ENCODE measurements at regions of chr12 and their contacts with region 1.

Region 1: DNA sequence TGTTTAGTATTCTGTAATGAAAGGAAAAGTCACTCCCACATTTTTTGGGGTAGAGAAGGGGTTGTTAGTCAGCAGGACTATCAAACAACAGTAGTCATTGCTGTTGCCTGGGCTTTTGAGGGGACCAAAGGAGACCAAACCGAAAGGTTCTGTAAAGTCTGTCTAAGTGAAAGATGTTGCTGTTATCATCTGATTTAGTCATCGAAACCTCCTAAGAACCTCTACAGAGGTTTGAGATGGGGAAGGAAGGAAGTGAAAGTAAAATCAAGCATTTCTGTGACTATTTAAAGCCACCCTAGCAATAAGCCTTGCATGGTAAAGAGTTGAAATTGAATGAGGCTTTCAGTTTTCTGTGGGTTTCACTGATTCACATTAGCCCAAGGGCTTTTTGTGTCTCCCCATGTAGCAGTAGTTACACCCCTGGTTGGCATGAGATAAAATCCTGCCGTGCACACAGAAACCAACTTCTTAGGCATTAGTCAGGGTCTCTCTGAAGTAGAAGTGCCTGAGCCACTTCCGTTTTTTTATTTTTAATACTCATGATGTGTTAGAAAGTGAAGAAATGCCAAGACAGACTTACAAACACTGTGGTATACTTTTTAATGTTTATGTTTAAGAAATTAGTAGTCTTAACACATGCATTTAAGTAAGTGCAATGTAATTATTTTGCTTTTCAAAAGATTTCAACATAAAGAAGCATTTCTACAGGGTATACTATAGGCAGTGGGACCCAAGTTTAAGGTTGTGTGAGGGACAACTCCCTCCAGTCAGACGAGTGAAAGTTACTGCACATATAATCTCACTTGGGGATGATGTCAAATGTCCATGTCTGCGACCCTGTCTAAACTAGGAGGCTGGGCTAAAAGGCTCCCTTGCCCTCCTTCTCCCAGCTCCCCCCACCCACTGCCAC is 50.4 kb downstream of the DYRK2 start:
- DNase-seq: peak; percentile 52
- ATAC-seq: peak; percentile 70
- H3K4me3 ChIP-seq: peak overlapping the region; percentile 34
- H3K27ac ChIP-seq: peak overlapping the region; percentile 21; the same call in 1 of the 2 replicates
- H3K4me1 ChIP-seq: peaks cover 8% of the 10 kb centered on the region
- H3K27me3 ChIP-seq: no peaks in the 10 kb centered on the region
- CTCF ChIP-seq: no peak
- POLR2A ChIP-seq: no peak
- RAD21 ChIP-seq: no peak

Region 2: GRCh38 chr12:67299926-67300325 is 399.0 kb before region 1 on chr12:
- CTCF ChIA-PET with region 1: no interaction called
- POLR2A ChIA-PET with region 1: no interaction called
- dilution Hi-C with region 1: no loop called
- in situ Hi-C with region 1: no loop called
- intact Hi-C with region 1: no loop called
- DNase-seq: no peak
- ATAC-seq: no peak
- H3K4me3 ChIP-seq: no peak overlapping the region
- H3K27ac ChIP-seq: no peak overlapping the region
- H3K4me1 ChIP-seq: no peaks in the 10 kb centered on the region
- H3K27me3 ChIP-seq: no peaks in the 10 kb centered on the region
- CTCF ChIP-seq: no peak
- POLR2A ChIP-seq: no peak
- RAD21 ChIP-seq: no peak

Region 3: GRCh38 chr12:67630373-67631088 is 68.4 kb before region 1 on chr12:
- CTCF ChIA-PET with region 1: no interaction called
- POLR2A ChIA-PET with region 1: no interaction called
- dilution Hi-C with region 1: no loop called
- in situ Hi-C with region 1: no loop called
- intact Hi-C with region 1: no loop called
- DNase-seq: no peak
- ATAC-seq: no peak
- H3K4me3 ChIP-seq: no peak overlapping the region
- H3K27ac ChIP-seq: no peak overlapping the region
- H3K4me1 ChIP-seq: no peaks in the 10 kb centered on the region
- H3K27me3 ChIP-seq: peaks cover 4% of the 10 kb centered on the region
- CTCF ChIP-seq: no peak
- POLR2A ChIP-seq: no peak
- RAD21 ChIP-seq: no peak

Region 4: GRCh38 chr12:67681105-67681778 is 17.7 kb before region 1 on chr12:
- CTCF ChIA-PET with region 1: no interaction called
- POLR2A ChIA-PET with region 1: no interaction called
- dilution Hi-C with region 1: no loop called
- in situ Hi-C with region 1: no loop called
- intact Hi-C with region 1: loop called (anchors 2 kb)
- DNase-seq: peak; percentile 97
- ATAC-seq: peak; percentile 78
- H3K4me3 ChIP-seq: no peak overlapping the region
- H3K27ac ChIP-seq: peak overlapping the region; percentile 91
- H3K4me1 ChIP-seq: peaks cover 6% of the 10 kb centered on the region
- H3K27me3 ChIP-seq: no peaks in the 10 kb centered on the region
- CTCF ChIP-seq: no peak
- POLR2A ChIP-seq: no peak
- RAD21 ChIP-seq: no peak

Region 5: DNA sequence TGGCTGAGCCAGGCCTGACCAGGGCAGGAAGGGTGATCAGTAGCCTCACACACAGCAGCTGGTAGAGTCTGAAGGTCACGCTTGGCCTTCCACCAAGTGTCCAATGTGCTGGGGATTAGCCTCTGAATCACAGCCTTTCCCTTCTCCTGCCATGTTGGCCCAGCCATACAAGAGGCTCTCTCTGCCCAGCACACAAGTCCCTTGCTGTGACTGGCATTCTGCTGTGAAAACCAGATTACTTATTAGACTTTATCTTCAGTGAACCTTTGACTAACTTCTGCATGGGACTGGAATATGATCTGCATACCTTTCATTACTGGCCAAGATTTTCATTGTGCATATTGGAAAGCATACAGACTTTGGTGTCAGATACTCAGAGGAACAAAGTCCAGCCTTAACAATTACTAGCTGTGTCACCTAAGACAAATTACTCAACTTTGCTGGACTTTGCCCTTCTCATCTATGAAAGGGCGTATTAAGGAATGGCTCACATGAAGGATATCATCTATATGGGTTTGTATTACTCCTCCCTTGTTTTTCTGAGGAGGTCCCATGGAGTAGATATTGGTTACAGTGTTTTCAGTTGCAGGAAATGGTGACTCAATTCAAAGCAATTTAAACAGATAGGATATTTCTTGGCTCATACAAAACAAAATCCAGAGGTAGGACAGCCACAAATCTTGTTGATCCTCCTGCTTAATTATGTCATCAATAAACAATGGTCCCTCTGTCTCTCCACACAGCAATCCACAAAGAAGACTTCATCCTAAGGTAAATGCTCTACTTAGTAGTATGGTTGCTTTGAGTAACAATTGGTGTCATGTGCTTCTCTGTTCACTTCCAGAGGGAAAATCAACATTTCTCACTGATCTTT is 49.2 kb after region 1 on chr12:
- CTCF ChIA-PET with region 1: no interaction called
- POLR2A ChIA-PET with region 1: no interaction called
- dilution Hi-C with region 1: no loop called
- in situ Hi-C with region 1: no loop called
- intact Hi-C with region 1: loop called (anchors 5 kb)
- DNase-seq: peak; percentile 72
- ATAC-seq: peak; percentile 86
- H3K4me3 ChIP-seq: no peak overlapping the region
- H3K27ac ChIP-seq: 0 out of 2 replicates have a peak overlapping the region, but pooled peaks have one; percentile 1
- H3K4me1 ChIP-seq: peaks cover 9% of the 10 kb centered on the region
- H3K27me3 ChIP-seq: no peaks in the 10 kb centered on the region
- CTCF ChIP-seq: no peak
- POLR2A ChIP-seq: no peak
- RAD21 ChIP-seq: no peak

Region 6: GRCh38 chr12:67794161-67794560 is 95.2 kb after region 1 on chr12:
- CTCF ChIA-PET with region 1: no interaction called
- POLR2A ChIA-PET with region 1: no interaction called
- dilution Hi-C with region 1: no loop called
- in situ Hi-C with region 1: no loop called
- intact Hi-C with region 1: loop called (anchors 5 kb)
- DNase-seq: peak; percentile 84
- ATAC-seq: peak; percentile 49
- H3K4me3 ChIP-seq: no peak overlapping the region
- H3K27ac ChIP-seq: no peak overlapping the region
- H3K4me1 ChIP-seq: peaks cover 9% of the 10 kb centered on the region
- H3K27me3 ChIP-seq: no peaks in the 10 kb centered on the region
- CTCF ChIP-seq: no peak
- POLR2A ChIP-seq: no peak
- RAD21 ChIP-seq: no peak

Region 7: GRCh38 chr12:67919406-67919805 is 220.5 kb after region 1 on chr12:
- CTCF ChIA-PET with region 1: no interaction called
- POLR2A ChIA-PET with region 1: no interaction called
- dilution Hi-C with region 1: no loop called
- in situ Hi-C with region 1: no loop called
- intact Hi-C with region 1: no loop called
- DNase-seq: no peak
- ATAC-seq: no peak
- H3K4me3 ChIP-seq: no peak overlapping the region
- H3K27ac ChIP-seq: no peak overlapping the region
- H3K4me1 ChIP-seq: no peaks in the 10 kb centered on the region
- H3K27me3 ChIP-seq: no peaks in the 10 kb centered on the region
- CTCF ChIP-seq: no peak
- POLR2A ChIP-seq: no peak
- RAD21 ChIP-seq: no peak

Measured in IMR-90 (cell line).